CD8-positive, alpha-beta T cell (primary cell): ENCODE measurements at regions of chr11 and their contacts with region 1.

Region 1: GRCh38 chr11:66842896-66843775 is at the start of gene RCE1:
- DNase-seq: peak; percentile 85 to 96 (median 89)
- ATAC-seq: peak; percentile 88
- H3K4me3 ChIP-seq: peak within 1 kb of the TSS; percentile 68 to 91
- H3K4me3 Mint-ChIP-seq: peak within 1 kb of the TSS; percentile 86
- H3K27ac ChIP-seq: peak within 1 kb of the TSS; percentile 99 to 100
- H3K27ac Mint-ChIP-seq: peak within 1 kb of the TSS; percentile 93
- H3K4me1 ChIP-seq: peaks cover 47% of the 10 kb centered on the region
- H3K4me1 Mint-ChIP-seq: peaks cover 51% of the 10 kb centered on the region
- H3K27me3 ChIP-seq: no peaks in the 10 kb centered on the region
- H3K27me3 Mint-ChIP-seq: no peaks in the 10 kb centered on the region
- CTCF ChIP-seq: no peak
- total RNA-seq, gene RCE1: 68.9 to 72.2 TPM

Region 2: DNA sequence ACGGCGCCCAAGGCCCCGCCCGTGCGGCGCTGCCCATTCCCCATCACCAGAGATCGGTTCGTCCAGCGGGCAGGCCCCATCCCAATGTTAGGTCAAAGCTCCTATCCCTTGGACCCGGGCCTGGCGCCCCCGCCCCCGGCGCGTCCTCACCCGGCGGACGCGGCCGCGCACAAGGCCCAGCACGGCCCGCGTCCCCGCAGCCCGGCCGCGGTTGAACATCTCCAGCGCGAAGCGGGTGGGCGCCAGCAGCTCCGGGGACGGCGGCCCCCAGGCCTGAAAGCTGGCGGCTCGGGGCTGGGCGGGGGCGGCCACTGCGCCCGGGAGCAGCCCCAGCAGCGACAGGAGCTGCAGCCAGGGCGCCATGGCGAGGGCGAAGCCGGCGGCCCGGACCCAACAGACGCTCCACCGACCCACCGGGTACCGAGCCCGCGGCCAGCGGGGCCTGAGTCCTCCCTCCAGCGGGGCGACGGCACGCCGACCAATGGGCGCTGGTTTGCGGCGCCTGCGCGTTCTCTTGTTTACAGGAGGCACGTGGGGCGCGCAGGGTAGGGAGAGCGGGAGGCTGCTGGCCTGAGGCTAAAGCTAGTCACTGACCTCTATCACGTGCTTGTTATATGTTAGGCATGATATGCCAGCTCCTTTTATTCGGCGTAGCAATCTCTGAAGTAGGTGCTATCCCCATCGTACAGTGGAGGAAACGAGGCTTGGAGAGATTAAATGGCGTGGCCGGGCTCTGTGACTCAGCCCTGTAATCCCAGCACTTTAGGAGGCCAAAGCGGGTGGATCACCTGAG is 274.8 kb before region 1 on chr11 and contains the start of gene CTSF:
- CTCF ChIA-PET with region 1: no interaction called
- POLR2A ChIA-PET with region 1: interaction called, 3 read pairs
- intact Hi-C with region 1: loop called in 1 of 2 experiments (anchors 10 kb)
- DNase-seq: peak; percentile 35 to 85 (median 74)
- ATAC-seq: peak; percentile 95
- H3K4me3 ChIP-seq: peak within 1 kb of the TSS; percentile 46 to 74
- H3K4me3 Mint-ChIP-seq: peak within 1 kb of the TSS; percentile 82
- H3K27ac ChIP-seq: peak within 1 kb of the TSS in 1 of 2 experiments; percentile 17
- H3K27ac Mint-ChIP-seq: peak within 1 kb of the TSS; percentile 81
- H3K4me1 ChIP-seq: peaks cover 12% of the 10 kb centered on the region
- H3K4me1 Mint-ChIP-seq: peaks cover 10% of the 10 kb centered on the region
- H3K27me3 ChIP-seq: peaks cover 0 to 3% of the 10 kb centered on the region in 2 experiments
- H3K27me3 Mint-ChIP-seq: no peaks in the 10 kb centered on the region
- CTCF ChIP-seq: no peak
- total RNA-seq, gene CTSF: 13.1 to 14.1 TPM

Region 3: DNA sequence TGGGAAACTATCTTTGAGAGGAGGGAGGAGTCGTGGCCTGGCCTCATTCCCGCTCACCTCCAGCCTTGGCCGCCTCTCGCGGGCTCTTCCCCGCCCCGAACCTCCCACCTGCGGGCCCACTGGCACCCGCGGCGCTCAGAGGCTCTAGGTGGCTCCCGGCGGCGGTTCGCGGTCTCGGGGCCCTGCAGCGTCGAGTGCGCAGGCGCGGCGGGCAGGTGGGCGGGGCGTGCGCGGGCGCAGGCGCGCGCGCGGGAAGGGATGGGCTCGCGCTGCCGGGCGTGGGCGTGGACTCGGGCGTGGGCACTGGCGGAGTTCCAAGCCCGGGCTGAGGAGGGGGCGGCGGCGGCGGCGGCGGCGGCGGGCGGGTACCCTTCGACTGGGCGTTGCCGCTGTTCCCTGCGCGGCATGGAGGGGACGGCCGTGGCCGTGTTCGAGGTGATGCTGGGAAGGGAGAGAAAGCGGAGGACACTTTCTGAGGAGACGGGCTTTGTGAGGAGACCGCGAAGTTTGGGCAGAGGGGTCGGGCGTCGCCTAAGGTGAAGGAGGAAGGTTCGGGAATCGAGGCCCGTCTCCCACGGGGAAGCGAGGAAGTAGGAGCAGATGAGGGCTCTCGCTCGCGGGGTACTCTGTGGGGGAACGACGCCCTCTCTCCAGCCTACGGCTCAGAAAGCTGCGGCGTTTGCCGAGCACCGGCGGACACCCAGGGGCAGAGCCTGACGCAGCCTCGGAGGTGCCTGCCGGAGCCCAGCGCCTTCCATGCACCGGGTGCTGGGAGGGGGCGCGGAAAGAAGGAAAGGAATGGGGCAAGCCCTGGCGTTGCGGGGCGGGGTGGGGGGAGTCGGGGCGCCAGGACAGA is 98.4 kb before region 1 on chr11:
- CTCF ChIA-PET with region 1: no interaction called
- POLR2A ChIA-PET with region 1: interaction called, 5 read pairs
- intact Hi-C with region 1: loop called (anchors 2 kb)
- DNase-seq: peak; percentile 76 to 93 (median 87)
- ATAC-seq: peak; percentile 87
- H3K4me3 ChIP-seq: peak overlapping the region; percentile 81 to 92
- H3K4me3 Mint-ChIP-seq: peak overlapping the region; percentile 90
- H3K27ac ChIP-seq: peak overlapping the region; percentile 49 to 71
- H3K27ac Mint-ChIP-seq: peak overlapping the region; percentile 75
- H3K4me1 ChIP-seq: peaks cover 5% of the 10 kb centered on the region
- H3K4me1 Mint-ChIP-seq: peaks cover 3% of the 10 kb centered on the region
- H3K27me3 ChIP-seq: no peaks in the 10 kb centered on the region
- H3K27me3 Mint-ChIP-seq: no peaks in the 10 kb centered on the region
- CTCF ChIP-seq: no peak

Region 4: GRCh38 chr11:66855574-66856495 is 12.7 kb after region 1 on chr11:
- CTCF ChIA-PET with region 1: interaction called, 3 read pairs
- POLR2A ChIA-PET with region 1: interaction called, 29 read pairs
- intact Hi-C with region 1: loop called (anchors 1 kb)
- DNase-seq: peak in 7 of 9 experiments; percentile 66 to 86 (median 77)
- ATAC-seq: peak; percentile 74
- H3K4me3 ChIP-seq: peak overlapping the region; percentile 62 to 80
- H3K4me3 Mint-ChIP-seq: peak overlapping the region; percentile 80
- H3K27ac ChIP-seq: peak overlapping the region; percentile 21 to 47
- H3K27ac Mint-ChIP-seq: peak overlapping the region; percentile 50
- H3K4me1 ChIP-seq: peaks cover 6% of the 10 kb centered on the region
- H3K4me1 Mint-ChIP-seq: peaks cover 8% of the 10 kb centered on the region
- H3K27me3 ChIP-seq: no peaks in the 10 kb centered on the region
- H3K27me3 Mint-ChIP-seq: no peaks in the 10 kb centered on the region
- CTCF ChIP-seq: no peak

Region 5: DNA sequence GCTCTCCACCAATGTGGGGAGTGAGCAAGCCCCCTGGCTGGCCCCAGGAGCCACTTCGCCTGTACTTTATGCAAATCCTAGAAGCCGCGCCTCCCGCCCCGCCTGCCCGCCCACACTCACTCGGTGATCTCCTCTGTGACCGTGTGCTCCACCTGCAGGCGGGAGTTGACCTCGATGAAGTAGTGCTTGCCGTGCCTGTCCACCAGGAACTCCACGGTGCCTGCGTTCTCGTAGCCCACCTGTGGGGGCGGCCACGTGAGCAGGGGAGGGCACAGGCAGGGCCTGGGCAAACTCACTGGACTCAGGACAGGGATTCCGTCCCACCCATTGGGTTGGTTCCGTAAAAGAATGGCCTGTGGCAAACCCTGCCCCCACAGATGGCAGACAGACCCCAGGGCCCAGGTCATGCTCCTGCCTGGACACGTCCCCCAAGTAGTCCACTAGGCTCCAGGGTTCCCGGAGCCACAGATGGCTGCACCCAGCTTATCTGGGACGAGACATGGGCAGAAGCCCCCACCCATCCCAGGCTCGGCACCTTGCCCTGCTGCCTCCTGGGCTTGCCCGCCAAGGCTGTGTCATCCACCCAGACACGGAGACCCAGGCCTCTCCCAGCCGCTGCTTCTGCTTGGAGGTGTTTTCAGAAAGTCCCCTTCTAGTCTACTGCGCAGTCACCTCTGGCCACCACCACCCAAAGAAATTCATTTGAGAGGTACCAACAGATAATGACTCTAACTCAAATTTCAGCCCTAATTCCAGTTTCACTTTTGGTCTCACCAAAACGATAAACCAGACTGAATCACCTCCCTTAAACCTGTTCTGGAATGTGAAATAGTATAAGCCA is 25.8 kb after region 1 on chr11:
- CTCF ChIA-PET with region 1: interaction called, 3 read pairs
- POLR2A ChIA-PET with region 1: no interaction called
- intact Hi-C with region 1: loop called in 1 of 2 experiments (anchors 1 kb)
- DNase-seq: peak; percentile 57 to 87 (median 81)
- ATAC-seq: peak; percentile 100
- H3K4me3 ChIP-seq: no peak overlapping the region
- H3K4me3 Mint-ChIP-seq: no peak overlapping the region
- H3K27ac ChIP-seq: no peak overlapping the region
- H3K27ac Mint-ChIP-seq: no peak overlapping the region
- H3K4me1 ChIP-seq: peaks cover 8% of the 10 kb centered on the region
- H3K4me1 Mint-ChIP-seq: peaks cover 9% of the 10 kb centered on the region
- H3K27me3 ChIP-seq: no peaks in the 10 kb centered on the region
- H3K27me3 Mint-ChIP-seq: no peaks in the 10 kb centered on the region
- CTCF ChIP-seq: peak; percentile 66

Region 6: DNA sequence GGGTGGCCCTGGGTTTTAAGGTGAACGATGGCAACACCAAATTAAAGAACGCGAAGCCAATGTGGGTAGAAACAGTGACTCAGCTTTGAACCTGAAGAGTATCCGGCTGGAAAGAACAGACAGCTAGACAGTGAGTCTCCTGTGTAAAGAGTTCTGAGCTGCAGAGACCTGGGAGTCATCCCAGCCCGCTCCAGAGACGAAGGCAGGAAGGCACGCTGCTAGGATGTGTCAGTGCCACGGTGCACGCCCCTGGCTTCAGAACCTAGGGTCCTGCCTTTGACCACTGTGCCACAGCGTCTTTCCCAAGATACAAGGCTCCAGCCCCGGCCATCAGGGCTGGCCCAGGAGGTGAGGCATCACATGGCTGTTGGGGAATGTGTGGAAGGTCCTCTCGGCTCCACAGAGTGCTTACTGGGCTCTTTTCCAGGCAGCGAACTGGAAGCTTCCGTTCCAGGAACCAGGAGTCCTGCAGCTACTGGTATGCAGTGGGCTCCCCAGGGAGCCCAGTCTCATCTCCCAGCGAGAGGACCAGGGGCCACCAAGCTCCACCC is 43.6 kb after region 1 on chr11:
- CTCF ChIA-PET with region 1: no interaction called
- POLR2A ChIA-PET with region 1: no interaction called
- intact Hi-C with region 1: no loop called
- DNase-seq: no peak
- ATAC-seq: no peak
- H3K4me3 ChIP-seq: no peak overlapping the region
- H3K4me3 Mint-ChIP-seq: no peak overlapping the region
- H3K27ac ChIP-seq: no peak overlapping the region
- H3K27ac Mint-ChIP-seq: no peak overlapping the region
- H3K4me1 ChIP-seq: no peaks in the 10 kb centered on the region
- H3K4me1 Mint-ChIP-seq: no peaks in the 10 kb centered on the region
- H3K27me3 ChIP-seq: no peaks in the 10 kb centered on the region
- H3K27me3 Mint-ChIP-seq: no peaks in the 10 kb centered on the region
- CTCF ChIP-seq: no peak